ENCODE measurements at regions of chr19 and their contacts with region 1.

Region 1: DNA sequence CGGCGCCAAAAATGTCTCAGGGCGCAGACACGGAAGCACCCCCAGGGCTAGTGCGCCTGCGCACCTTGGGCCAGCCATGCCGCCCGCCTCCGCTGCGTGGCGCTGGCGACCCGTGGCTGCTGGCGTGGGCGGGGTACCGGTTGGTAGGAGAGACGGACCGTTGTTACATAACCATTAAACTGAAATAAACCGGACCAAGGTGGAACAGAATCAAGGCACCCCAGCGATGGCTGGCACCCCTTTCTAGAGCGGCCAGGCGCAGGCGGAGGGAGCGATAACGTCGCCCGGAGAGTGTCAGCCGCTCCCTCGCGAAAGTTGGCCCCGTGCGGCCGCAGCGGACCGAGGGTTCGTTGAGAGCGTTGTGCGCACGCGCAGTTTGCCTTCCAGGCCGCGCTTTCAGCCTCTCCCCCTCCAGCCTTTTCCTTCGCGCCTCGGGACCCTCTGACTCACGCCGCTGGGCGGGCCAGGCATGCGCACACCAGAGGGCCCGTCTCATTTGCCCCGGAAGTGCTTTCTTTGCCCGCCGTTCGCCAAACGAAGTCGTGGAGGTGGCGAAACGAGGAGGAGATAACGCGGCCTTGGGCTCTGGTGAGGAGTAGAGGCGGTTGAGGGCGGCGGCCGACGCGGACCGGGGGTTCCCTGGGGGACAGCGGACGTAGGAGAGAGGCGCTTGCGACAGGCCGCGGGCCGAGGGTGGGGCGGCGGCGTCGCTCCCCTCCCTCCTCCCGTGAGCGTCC is at the starts of genes PLEKHJ1 and SF3A2:
- DNase-seq: peak; percentile 99
- H3K4me3 ChIP-seq: peak within 1 kb of the TSS; percentile 96
- H3K27ac ChIP-seq: peak within 1 kb of the TSS; percentile 75
- H3K4me1 ChIP-seq: peaks cover 68% of the 10 kb centered on the region
- CTCF ChIP-seq: peak; percentile 97
- total RNA-seq, gene PLEKHJ1: 205 and 221 TPM in 2 replicates
- total RNA-seq, gene SF3A2: 104 and 124 TPM in 2 replicates

Region 2: DNA sequence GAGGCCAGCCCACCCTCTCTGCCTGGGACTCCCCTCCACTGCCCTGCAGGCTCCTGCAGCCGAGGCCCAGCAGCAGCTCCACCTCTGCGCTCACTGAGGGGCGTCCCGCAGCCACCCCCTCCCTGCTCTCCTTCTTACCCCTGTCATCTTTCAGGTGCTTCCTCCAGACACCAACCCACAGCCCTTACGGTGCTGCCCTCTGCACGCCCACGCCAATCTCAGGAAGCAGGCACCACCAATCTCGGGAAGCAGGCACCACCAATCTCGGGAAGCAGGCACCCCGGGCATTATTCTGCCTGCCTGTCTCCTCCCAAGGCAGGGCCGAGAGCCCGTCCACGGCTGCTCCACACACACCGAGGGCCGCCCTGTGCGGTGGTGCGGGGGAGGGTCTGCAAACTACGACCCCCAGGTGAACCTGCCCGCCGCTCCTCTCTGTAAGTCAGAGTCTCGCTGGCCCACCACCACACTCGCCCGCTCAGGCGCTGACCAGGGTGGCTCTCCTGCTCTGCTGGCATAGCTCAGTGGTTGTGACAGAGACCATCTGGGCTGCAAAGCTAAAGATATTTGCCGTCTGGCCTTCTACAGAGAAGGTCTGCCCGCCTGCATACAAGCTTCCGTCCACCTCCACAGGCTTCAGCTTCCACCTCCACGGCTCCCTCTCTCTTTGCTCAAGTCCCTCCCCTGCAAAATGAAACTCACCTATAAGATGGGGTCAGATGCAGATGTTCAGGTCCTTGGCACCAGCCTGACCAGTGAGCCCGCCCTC is 89.0 kb after region 1 on chr19:
- CTCF ChIA-PET with region 1: no interaction called
- POLR2A ChIA-PET with region 1: no interaction called
- intact Hi-C with region 1: no loop called
- DNase-seq: no peak
- H3K4me3 ChIP-seq: peak overlapping the region; percentile 10
- H3K27ac ChIP-seq: no peak overlapping the region
- H3K4me1 ChIP-seq: peaks cover 34% of the 10 kb centered on the region
- CTCF ChIP-seq: no peak

Region 3: DNA sequence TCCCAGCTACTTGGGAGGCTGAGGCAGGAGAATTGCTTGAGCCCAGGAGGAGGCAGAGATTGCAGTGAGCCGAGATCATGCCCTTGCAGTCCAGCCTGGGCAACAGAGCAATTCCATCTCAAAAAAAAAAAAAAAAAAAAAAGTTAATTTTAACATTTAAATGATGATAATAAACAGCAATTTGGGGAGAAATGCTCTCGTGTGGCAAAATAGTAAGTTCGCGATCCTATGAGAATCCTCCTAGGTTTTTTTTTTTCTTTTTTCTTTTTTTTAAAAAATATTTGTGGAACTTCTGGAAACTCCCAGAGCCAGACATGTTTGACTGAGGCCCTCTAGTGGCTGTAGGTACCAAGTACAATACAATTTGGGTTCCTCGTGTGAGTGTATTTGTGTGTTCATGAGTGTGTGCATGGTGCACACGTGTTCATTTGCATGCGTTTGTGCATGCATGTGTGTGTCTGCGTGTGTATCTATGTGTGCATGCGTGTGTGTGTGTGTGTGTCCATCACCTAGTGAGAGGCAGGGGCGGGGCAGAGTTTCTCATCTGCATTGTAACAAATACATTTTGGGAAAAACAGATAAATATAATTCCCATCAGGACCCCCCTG is 154.7 kb after region 1 on chr19:
- CTCF ChIA-PET with region 1: no interaction called
- POLR2A ChIA-PET with region 1: interaction called, 3 read pairs
- intact Hi-C with region 1: loop called (anchors 1 kb)
- DNase-seq: peak; percentile 86
- H3K4me3 ChIP-seq: no peak overlapping the region
- H3K27ac ChIP-seq: no peak overlapping the region
- H3K4me1 ChIP-seq: peaks cover 22% of the 10 kb centered on the region
- CTCF ChIP-seq: peak; percentile 92